ENCODE measurements at regions of chr6 and their contacts with region 1.

Region 1: GRCh38 chr6:131949909-131950766 is 1.0 kb downstream of the CCN2 start:
- DNase-seq: peak; percentile 87
- H3K4me3 ChIP-seq: peak overlapping the region; percentile 98
- H3K27ac ChIP-seq: peak overlapping the region; percentile 97
- H3K27me3 ChIP-seq: no peaks in the 10 kb centered on the region
- CTCF ChIP-seq: peak; percentile 46

Region 2: GRCh38 chr6:131937703-131938631 is 12.2 kb before region 1 on chr6:
- CTCF ChIA-PET with region 1: no interaction called
- POLR2A ChIA-PET with region 1: interaction called, 19 read pairs
- DNase-seq: peak; percentile 56
- H3K4me3 ChIP-seq: no peak overlapping the region
- H3K27ac ChIP-seq: peak overlapping the region; percentile 50
- H3K27me3 ChIP-seq: no peaks in the 10 kb centered on the region
- CTCF ChIP-seq: no peak

Region 3: GRCh38 chr6:132063738-132064137 is 113.6 kb after region 1 on chr6:
- CTCF ChIA-PET with region 1: interaction called, 3 read pairs
- POLR2A ChIA-PET with region 1: interaction called, 50 read pairs
- DNase-seq: peak; percentile 47
- H3K4me3 ChIP-seq: no peak overlapping the region
- H3K27ac ChIP-seq: peak overlapping the region; percentile 57
- H3K27me3 ChIP-seq: no peaks in the 10 kb centered on the region
- CTCF ChIP-seq: no peak

Region 4: GRCh38 chr6:132122871-132123270 is 172.7 kb after region 1 on chr6:
- CTCF ChIA-PET with region 1: interaction called, 6 read pairs
- POLR2A ChIA-PET with region 1: interaction called, 98 read pairs
- DNase-seq: peak; percentile 100
- H3K4me3 ChIP-seq: no peak overlapping the region
- H3K27ac ChIP-seq: peak overlapping the region; percentile 98
- H3K27me3 ChIP-seq: no peaks in the 10 kb centered on the region
- CTCF ChIP-seq: no peak

Region 5: DNA sequence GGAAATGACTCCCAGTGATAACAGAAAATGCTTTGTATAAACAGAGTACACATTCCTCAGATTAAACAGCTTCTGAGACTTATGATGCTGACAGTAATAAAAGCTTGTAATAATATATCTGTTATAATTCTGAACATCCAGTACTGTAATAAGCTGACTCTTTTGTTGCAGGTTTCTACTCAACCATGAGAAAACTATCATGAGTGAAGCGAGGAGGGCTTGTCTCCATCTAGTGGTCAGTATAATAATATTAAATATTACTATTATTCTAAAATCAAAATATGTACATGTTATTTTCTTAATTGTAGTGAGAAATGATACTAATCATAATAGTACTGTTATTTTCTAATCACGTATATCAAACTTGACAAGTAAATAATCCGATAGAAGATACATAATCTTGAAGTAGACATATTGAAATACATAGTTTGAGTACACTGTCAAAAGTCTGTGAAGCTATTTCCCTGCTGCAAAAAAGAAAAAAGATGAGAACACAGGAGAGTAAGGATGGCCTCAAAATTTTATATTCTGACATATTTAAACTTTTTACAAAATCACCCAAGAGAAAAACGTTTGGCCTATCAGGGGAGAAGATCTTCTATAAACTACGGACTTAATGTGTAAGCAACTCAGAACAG is 268.0 kb after region 1 on chr6:
- CTCF ChIA-PET with region 1: interaction called, 15 read pairs
- POLR2A ChIA-PET with region 1: interaction called, 9 read pairs
- DNase-seq: peak; percentile 23
- H3K4me3 ChIP-seq: no peak overlapping the region
- H3K27ac ChIP-seq: no peak overlapping the region
- H3K27me3 ChIP-seq: no peaks in the 10 kb centered on the region
- CTCF ChIP-seq: peak; percentile 59